CD8-positive, alpha-beta T cell (primary cell): ENCODE measurements at regions of chr7 and their contacts with region 1.

Region 1: GRCh38 chr7:75762314-75762917 is 9.6 kb downstream of the CCL26 start:
- DNase-seq: peak in 2 of 9 experiments; percentile 59 to 69
- ATAC-seq: peak; percentile 95
- H3K4me3 ChIP-seq: no peak overlapping the region
- H3K4me3 Mint-ChIP-seq: no peak overlapping the region
- H3K27ac ChIP-seq: no peak overlapping the region
- H3K27ac Mint-ChIP-seq: no peak overlapping the region
- H3K4me1 ChIP-seq: no peaks in the 10 kb centered on the region
- H3K4me1 Mint-ChIP-seq: peaks cover 5% of the 10 kb centered on the region
- H3K27me3 ChIP-seq: no peaks in the 10 kb centered on the region
- H3K27me3 Mint-ChIP-seq: no peaks in the 10 kb centered on the region
- CTCF ChIP-seq: peak; percentile 75

Region 2: DNA sequence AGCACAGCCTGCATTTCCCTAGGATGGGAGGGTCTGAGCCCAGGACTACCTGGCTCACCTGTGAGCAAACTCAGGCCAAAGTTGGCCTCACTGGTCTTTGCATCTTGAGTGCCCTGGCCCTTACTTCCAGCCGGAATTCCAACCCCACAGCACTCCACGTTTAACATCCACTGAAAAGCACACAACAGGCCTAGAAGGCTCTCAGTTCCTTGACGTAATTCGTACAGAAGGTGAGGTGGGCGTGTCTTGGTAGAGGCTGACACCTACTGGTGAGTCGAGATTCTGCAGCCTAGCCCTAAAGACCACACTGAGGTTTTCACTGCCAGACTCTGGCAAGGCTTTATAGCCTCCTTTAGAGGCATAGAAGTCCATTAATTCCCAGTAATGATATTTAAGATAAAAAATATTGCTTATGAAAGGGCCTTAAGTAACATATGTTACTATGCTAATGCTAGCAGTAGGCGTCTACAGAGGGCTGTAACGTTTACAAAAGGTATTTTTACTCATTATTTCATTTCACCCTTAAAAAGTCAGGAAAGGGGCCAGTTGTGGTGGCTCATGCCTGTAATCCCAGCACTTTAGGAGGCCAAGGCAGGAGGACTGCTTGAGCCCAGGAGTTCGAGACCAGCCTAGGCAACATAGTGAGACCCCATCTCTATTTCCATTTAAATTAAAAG is 119.5 kb before region 1 on chr7:
- CTCF ChIA-PET with region 1: interaction called, 3 read pairs
- POLR2A ChIA-PET with region 1: no interaction called
- intact Hi-C with region 1: loop called in 1 of 2 experiments (anchors 2 kb)
- DNase-seq: peak; percentile 33 to 85 (median 69)
- ATAC-seq: peak; percentile 98
- H3K4me3 ChIP-seq: no peak overlapping the region
- H3K4me3 Mint-ChIP-seq: no peak overlapping the region
- H3K27ac ChIP-seq: no peak overlapping the region
- H3K27ac Mint-ChIP-seq: no peak overlapping the region
- H3K4me1 ChIP-seq: peaks cover 7% of the 10 kb centered on the region
- H3K4me1 Mint-ChIP-seq: peaks cover 11% of the 10 kb centered on the region
- H3K27me3 ChIP-seq: no peaks in the 10 kb centered on the region
- H3K27me3 Mint-ChIP-seq: no peaks in the 10 kb centered on the region
- CTCF ChIP-seq: peak; percentile 89

Region 3: DNA sequence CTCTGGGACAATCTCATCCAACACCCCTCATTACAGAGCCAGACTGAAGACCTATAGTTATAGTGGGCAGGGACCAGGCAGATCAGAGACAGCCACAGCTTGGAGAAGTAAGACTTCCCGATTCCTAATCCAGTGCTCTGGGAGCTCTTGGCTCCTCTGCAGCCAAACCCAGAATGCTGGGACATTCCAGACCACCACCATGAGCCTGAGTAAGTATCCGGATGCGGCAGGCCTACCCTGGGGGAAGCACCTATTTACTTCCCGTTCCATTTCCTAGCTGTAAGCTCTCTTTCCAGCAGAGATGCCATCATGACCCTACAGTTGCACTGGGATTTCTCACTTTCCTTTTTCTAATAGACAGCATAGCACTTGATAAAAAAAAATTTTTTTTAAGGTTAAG is 40.0 kb before region 1 on chr7:
- CTCF ChIA-PET with region 1: no interaction called
- POLR2A ChIA-PET with region 1: no interaction called
- intact Hi-C with region 1: no loop called
- DNase-seq: no peak
- ATAC-seq: no peak
- H3K4me3 ChIP-seq: no peak overlapping the region
- H3K4me3 Mint-ChIP-seq: no peak overlapping the region
- H3K27ac ChIP-seq: no peak overlapping the region
- H3K27ac Mint-ChIP-seq: no peak overlapping the region
- H3K4me1 ChIP-seq: peaks cover under 1% of the 10 kb centered on the region
- H3K4me1 Mint-ChIP-seq: peaks cover under 1% of the 10 kb centered on the region
- H3K27me3 ChIP-seq: no peaks in the 10 kb centered on the region
- H3K27me3 Mint-ChIP-seq: no peaks in the 10 kb centered on the region
- CTCF ChIP-seq: no peak